ENCODE measurements at regions of chr15 and their contacts with region 1.

Region 1: GRCh38 chr15:101246391-101246790 is 5.5 kb downstream of the CHSY1 start:
- DNase-seq: no peak
- ATAC-seq: no peak
- H3K4me3 ChIP-seq: no peak overlapping the region
- H3K4me3 Mint-ChIP-seq: peak overlapping the region in 1 of 3 donors; percentile 17
- H3K27ac ChIP-seq: no peak overlapping the region
- H3K27ac Mint-ChIP-seq: peak overlapping the region; percentile 21 to 75
- H3K4me1 ChIP-seq: peaks cover 37 to 64% of the 10 kb centered on the region in 2 experiments
- H3K4me1 Mint-ChIP-seq: peaks cover 75 to 91% (median 88%) of the 10 kb centered on the region in 3 donors
- H3K27me3 ChIP-seq: no peaks in the 10 kb centered on the region
- H3K27me3 Mint-ChIP-seq: no peaks in the 10 kb centered on the region

Region 2: GRCh38 chr15:101156509-101157159 is 89.8 kb before region 1 on chr15:
- CTCF ChIA-PET with region 1: no interaction called
- POLR2A ChIA-PET with region 1: no interaction called
- DNase-seq: no peak
- ATAC-seq: no peak
- H3K4me3 ChIP-seq: no peak overlapping the region
- H3K4me3 Mint-ChIP-seq: no peak overlapping the region
- H3K27ac ChIP-seq: no peak overlapping the region
- H3K27ac Mint-ChIP-seq: no peak overlapping the region
- H3K4me1 ChIP-seq: peaks cover 0 to 15% of the 10 kb centered on the region in 2 experiments
- H3K4me1 Mint-ChIP-seq: peaks cover 0 to 7% (median 3%) of the 10 kb centered on the region in 3 donors
- H3K27me3 ChIP-seq: peaks cover 0 to 8% of the 10 kb centered on the region in 2 experiments
- H3K27me3 Mint-ChIP-seq: peaks cover 0 to 2% of the 10 kb centered on the region in 2 donors

Region 3: DNA sequence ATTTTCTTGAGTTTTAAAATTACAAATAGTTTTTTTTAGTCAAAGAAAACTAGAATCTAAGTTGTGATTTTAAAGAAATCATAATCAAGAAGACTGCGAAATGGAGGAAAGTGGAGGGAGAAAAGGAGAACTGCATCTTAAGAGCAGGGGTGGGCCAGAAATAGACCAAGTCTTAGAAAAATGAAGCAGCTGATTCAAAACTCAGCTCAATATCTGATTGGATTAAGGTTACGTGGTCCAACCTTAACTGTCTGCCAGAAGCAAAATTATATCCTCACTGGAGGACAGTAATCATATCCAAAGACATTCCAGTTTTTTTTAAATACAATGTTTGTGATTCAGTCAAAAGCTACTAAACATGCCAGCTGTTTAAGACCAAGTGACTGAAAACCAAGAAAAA is 35.9 kb before region 1 on chr15:
- CTCF ChIA-PET with region 1: no interaction called
- POLR2A ChIA-PET with region 1: interaction called in 1 of 2 experiments, 14 read pairs
- DNase-seq: no peak
- ATAC-seq: no peak
- H3K4me3 ChIP-seq: no peak overlapping the region
- H3K4me3 Mint-ChIP-seq: no peak overlapping the region
- H3K27ac ChIP-seq: no peak overlapping the region
- H3K27ac Mint-ChIP-seq: peak overlapping the region in 1 of 2 donors; percentile 41
- H3K4me1 ChIP-seq: peaks cover 4 to 5% of the 10 kb centered on the region in 2 experiments
- H3K4me1 Mint-ChIP-seq: peaks cover 72 to 78% (median 77%) of the 10 kb centered on the region in 3 donors
- H3K27me3 ChIP-seq: no peaks in the 10 kb centered on the region
- H3K27me3 Mint-ChIP-seq: no peaks in the 10 kb centered on the region